ENCODE measurements at regions of chr1 and their contacts with region 1.

Region 1: DNA sequence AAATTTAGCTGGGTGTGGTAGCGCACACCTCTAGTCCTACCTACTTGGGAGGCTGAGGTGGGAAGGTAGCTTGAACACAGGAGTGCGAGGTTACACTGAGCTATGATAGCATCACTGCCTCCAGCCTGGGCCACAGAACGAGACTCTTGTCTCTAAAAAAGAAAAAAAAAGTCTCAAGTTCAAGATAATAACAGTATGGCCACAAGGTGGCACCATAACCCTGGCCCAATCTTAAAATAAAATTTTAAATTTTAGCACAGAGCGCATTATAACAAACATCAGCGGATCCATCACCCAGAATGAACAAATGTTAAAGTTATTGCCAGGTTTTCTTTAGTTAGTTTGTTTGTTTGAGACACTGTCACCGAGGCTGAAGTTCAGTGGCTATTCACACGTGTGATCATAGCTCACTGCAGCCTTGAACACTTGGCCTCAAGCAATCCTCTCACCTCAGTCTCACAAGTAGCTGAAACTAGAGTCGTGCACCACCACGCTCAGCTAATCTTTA is 2.9 kb upstream of the HTR6 start:
- DNase-seq: no peak
- H3K4me3 ChIP-seq: no peak overlapping the region
- H3K27me3 ChIP-seq: peaks cover 21% of the 10 kb centered on the region
- CTCF ChIP-seq: peak; percentile 65

Region 2: DNA sequence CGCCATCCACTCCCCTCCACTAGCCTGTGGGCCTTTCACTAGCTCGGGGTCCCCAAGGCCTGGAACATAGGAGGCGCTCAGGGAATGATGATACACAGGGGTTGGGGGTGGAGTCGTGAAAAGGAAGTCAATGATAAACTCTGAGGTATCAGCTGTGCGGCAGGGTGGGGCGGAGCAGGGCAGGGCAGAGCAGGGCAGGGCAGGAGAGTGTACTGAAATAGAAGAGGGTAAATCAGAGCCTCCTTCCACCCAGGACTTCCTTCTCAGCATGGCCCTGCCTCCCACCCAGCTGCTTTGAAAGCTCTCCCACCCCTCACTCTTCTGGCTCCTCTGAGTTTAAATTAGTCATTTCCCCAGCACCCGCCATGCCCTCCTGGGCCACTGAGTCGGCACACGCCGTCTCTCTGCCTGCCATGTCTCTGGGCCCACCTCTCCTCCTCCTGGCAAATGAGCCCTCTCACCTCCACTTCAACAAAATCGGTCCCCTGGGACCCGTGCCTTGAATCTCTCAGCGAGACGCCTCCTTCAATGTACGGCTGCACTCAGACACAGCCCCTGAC is 193.3 kb before region 1 on chr1:
- CTCF ChIA-PET with region 1: no interaction called
- POLR2A ChIA-PET with region 1: interaction called, 15 read pairs
- DNase-seq: no peak
- H3K4me3 ChIP-seq: no peak overlapping the region
- H3K27me3 ChIP-seq: no peaks in the 10 kb centered on the region
- CTCF ChIP-seq: no peak

Region 3: DNA sequence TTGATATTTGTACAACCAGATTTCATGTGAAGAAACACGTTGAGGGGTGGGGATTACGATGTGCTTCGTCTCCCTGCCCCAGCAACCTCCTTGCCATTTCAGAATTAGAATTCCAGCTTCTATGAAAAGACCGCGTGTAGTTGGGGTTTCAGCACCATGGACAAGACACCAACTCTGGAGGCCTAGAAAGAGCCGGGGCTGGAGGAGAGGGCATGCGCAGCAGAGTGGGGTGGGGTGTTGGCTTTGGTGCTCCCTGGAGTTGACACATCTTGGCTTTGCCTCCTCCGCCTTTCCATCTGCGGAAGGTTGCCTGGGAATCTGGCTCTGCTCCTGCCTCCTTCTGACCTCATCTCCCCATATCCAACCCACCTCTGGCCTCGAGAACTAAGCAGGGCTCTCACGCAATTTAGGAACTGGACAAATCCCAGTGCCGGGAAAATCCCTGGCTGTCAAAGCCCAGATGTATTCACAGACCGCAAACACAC is 14.7 kb after region 1 on chr1:
- CTCF ChIA-PET with region 1: interaction called, 20 read pairs
- POLR2A ChIA-PET with region 1: no interaction called
- DNase-seq: no peak
- H3K4me3 ChIP-seq: no peak overlapping the region
- H3K27me3 ChIP-seq: peaks cover 4% of the 10 kb centered on the region; the same call in 1 of the 2 replicates
- CTCF ChIP-seq: no peak

Region 4: GRCh38 chr1:19682257-19682656 is 20.5 kb after region 1 on chr1:
- CTCF ChIA-PET with region 1: interaction called, 20 read pairs
- POLR2A ChIA-PET with region 1: no interaction called
- DNase-seq: peak; percentile 59
- H3K4me3 ChIP-seq: no peak overlapping the region
- H3K27me3 ChIP-seq: no peaks in the 10 kb centered on the region; the same call in 1 of the 2 replicates
- CTCF ChIP-seq: no peak

Region 5: DNA sequence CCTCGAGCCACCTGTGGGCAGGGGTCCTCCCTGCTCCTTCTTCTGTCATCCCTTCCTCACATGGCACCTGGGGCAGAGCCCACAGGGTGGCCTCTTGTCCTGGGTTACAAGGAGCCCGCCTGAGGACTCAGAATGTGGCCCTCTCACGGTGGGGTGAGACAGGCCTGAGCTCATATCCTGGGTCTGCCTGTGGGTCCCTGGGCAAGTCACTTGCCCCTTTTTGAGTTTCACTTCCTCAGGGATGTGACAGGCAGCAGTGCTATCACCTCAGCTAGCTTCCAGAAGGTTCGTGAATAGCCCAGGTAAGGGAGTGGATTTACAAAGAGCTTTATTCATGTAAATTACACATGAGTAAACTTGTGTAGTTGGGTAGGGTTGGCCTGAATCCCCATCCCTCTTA is 36.4 kb after region 1 on chr1:
- CTCF ChIA-PET with region 1: interaction called, 162 read pairs
- POLR2A ChIA-PET with region 1: no interaction called
- DNase-seq: no peak
- H3K4me3 ChIP-seq: no peak overlapping the region
- H3K27me3 ChIP-seq: no peaks in the 10 kb centered on the region
- CTCF ChIP-seq: no peak

Region 6: GRCh38 chr1:20124456-20125057 is 462.8 kb after region 1 on chr1:
- CTCF ChIA-PET with region 1: no interaction called
- POLR2A ChIA-PET with region 1: no interaction called
- DNase-seq: no peak
- H3K4me3 ChIP-seq: no peak overlapping the region
- H3K27me3 ChIP-seq: no peaks in the 10 kb centered on the region; the same call in none of the 2 replicates
- CTCF ChIP-seq: no peak